Ascending aorta (tissue), 2 donors: ENCODE measurements at regions of chr2 and their contacts with region 1.

Region 1: DNA sequence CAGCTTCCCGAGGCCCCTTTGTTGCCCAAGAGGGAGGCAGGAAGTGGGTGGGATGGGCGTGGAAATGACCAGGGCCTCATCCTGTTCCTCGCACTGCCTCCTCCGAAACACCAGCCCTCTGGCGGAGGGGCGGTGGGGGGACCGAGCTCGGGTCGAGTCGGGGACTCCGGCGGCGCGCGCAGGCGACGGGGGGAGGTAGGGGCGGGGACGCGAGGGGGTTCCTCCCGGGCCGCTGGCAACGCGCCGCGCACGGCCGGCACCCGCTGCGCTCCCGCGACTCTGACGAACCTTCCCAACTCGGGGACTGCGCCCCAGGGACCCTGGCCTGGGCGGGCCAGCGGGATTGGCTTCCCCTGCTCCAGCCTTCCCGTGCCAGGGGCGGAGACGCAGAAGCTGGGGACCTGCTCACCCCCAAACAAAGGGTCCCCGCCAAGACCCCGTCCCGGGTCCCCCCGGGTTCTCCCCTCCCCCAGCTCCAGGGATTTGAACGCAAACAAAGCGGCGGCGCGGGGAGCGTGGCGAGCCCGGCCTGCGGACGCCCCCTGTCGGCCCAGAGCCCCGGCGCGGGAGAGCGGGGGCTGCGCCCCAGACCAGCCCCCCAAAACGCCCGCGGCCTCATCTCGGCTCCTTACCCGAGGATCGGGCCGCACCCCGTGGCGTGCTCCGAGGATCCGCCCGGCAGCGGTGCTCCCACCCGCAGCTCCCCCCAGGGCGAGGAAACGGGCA is 1.2 kb downstream of the SEMA4C start:
- DNase-seq: peak; percentile 73 to 95
- H3K4me3 ChIP-seq: peak overlapping the region; percentile 88 to 98
- H3K27ac ChIP-seq: peak overlapping the region; percentile 96 to 99
- H3K4me1 ChIP-seq: peaks cover 18 to 38% of the 10 kb centered on the region in 2 donors
- H3K27me3 ChIP-seq: no peaks in the 10 kb centered on the region
- CTCF ChIP-seq: peak; percentile 51 to 66 (median 62)

Region 2: DNA sequence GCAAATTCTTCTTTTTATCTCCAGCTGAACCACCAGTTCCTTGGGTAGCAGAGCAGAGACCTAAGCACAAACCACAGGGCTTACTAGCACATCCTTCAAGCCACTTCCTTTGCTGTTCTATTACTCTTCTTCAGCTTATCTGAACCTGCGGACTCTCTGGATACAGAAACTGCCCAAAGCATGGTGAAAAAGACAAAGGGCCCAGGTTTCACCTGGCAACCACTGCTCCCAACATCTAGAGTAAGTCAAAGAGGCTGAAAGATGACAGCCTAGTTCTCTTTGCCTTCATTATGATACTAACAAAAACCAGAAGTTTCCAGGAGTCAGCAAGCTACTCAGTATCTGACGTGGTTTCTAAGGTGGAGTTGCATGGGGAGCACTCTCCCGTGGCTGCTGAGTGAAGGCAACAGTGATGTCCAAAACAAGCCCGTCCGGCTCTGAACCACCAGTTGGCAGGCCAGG is 274.0 kb before region 1 on chr2:
- intact Hi-C with region 1: no loop called
- DNase-seq: no peak
- H3K4me3 ChIP-seq: no peak overlapping the region
- H3K27ac ChIP-seq: no peak overlapping the region
- H3K4me1 ChIP-seq: no peaks in the 10 kb centered on the region
- H3K27me3 ChIP-seq: no peaks in the 10 kb centered on the region
- CTCF ChIP-seq: no peak

Region 3: GRCh38 chr2:96887412-96888012 is 18.8 kb after region 1 on chr2:
- intact Hi-C with region 1: loop called (anchors 2 kb)
- DNase-seq: no peak
- H3K4me3 ChIP-seq: peak overlapping the region in 1 of 2 donors; percentile 36
- H3K27ac ChIP-seq: peak overlapping the region; percentile 72 to 78
- H3K4me1 ChIP-seq: peaks cover 25 to 47% of the 10 kb centered on the region in 2 donors
- H3K27me3 ChIP-seq: no peaks in the 10 kb centered on the region
- CTCF ChIP-seq: no peak

Region 4: GRCh38 chr2:97095661-97096060 is 226.9 kb after region 1 on chr2:
- intact Hi-C with region 1: loop called (anchors 10 kb)
- DNase-seq: no peak
- H3K4me3 ChIP-seq: peak overlapping the region; percentile 50 to 58
- H3K27ac ChIP-seq: peak overlapping the region; percentile 68 to 73
- H3K4me1 ChIP-seq: peaks cover 6% of the 10 kb centered on the region in 2 donors
- H3K27me3 ChIP-seq: no peaks in the 10 kb centered on the region
- CTCF ChIP-seq: no peak